ENCODE measurements at regions of chr16 and their contacts with region 1.

Region 1: DNA sequence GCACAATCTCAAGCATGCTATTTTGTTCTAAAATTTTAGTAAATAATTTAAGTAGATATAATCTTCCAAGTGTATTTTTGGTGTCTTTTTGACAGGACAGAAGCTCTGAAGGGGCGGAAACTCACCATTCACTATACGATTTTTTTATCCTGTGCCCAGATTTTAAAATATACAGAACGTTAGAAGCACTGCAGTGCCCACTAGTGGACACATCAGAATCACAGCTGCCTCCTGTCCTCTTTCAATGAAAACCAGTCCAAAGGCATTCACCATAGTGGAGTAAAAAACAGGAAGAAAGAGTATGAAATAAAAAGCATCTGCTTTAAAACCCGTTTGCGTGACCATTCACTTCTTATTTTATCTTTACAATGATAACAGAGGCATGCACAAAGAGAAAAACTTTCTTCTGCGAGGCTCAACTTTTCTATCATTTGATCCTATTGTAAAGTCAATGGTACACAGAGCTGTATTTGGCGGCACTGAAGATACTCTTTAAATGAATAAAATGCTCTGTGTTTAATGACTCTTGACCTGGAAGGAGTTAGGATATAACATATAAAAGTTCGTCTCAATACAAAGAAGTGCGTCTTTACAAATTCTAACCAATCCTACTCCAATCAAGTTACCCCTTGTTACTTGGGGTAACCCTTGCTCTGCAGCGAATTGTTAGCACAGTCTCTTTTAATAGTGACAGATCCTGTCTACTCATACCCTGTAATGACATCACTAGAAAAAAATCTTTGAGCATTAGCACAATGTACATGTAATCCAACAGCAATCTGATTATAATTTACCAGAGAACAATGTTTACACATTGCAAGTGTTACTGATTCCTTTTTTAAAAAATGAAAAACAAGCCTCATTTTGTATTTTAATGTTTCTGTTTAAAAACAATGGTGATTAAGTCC is 339.8 kb upstream of the PSMD7 start:
- DNase-seq: peak; percentile 14
- H3K4me3 ChIP-seq: no peak overlapping the region
- CTCF ChIP-seq: peak; percentile 62

Region 2: GRCh38 chr16:72501739-72502593 is 1454.9 kb before region 1 on chr16:
- CTCF ChIA-PET with region 1: interaction called, 11 read pairs
- POLR2A ChIA-PET with region 1: no interaction called
- DNase-seq: peak; percentile 19
- H3K4me3 ChIP-seq: no peak overlapping the region
- CTCF ChIP-seq: peak; percentile 82

Region 3: GRCh38 chr16:73966851-73967250 is 10.0 kb after region 1 on chr16:
- CTCF ChIA-PET with region 1: interaction called, 14 read pairs
- POLR2A ChIA-PET with region 1: no interaction called
- DNase-seq: no peak
- H3K4me3 ChIP-seq: no peak overlapping the region
- CTCF ChIP-seq: no peak